ENCODE measurements at regions of chr6 and their contacts with region 1.

Region 1: GRCh38 chr6:122246906-122247658 is 152.4 kb upstream of the HSF2 start:
- DNase-seq: no peak
- H3K4me3 ChIP-seq: no peak overlapping the region
- H3K27ac ChIP-seq: no peak overlapping the region
- H3K4me1 ChIP-seq: no peaks in the 10 kb centered on the region
- H3K27me3 ChIP-seq: no peaks in the 10 kb centered on the region
- CTCF ChIP-seq: no peak

Region 2: DNA sequence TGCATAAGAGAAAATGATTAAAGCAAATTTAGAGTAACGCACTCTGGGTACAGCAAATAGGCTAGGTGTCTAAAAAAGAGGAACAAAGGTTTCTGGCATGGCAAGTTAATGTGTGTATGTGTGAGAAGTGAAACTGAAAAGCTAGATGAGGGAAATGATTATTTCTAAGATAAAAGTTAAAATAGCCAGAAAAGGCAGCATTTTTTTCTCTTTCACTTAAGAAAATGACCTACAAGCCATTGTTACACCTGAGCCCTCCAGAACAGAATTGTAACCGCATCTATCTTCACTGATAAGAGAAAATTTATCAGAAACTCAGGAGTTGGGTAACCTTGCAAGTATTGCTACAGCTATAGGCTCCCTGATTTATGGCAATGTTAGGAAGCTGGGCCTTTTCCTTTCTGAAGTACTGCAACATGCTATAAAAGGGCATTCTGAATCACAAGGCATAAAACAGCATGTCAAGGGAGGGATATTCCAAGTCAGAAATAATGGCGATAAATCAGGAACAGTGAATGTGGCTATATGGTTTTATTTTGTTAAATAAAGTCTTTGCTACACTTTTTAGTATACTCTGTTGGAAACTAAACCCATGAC is 1308.1 kb before region 1 on chr6:
- CTCF ChIA-PET with region 1: no interaction called
- POLR2A ChIA-PET with region 1: interaction called, 12 read pairs
- intact Hi-C with region 1: no loop called
- DNase-seq: no peak
- H3K4me3 ChIP-seq: no peak overlapping the region
- H3K27ac ChIP-seq: no peak overlapping the region
- H3K4me1 ChIP-seq: no peaks in the 10 kb centered on the region
- H3K27me3 ChIP-seq: no peaks in the 10 kb centered on the region
- CTCF ChIP-seq: no peak